GM12878 (cell line): ENCODE measurements at regions of chr10 and their contacts with region 1.

Region 1: DNA sequence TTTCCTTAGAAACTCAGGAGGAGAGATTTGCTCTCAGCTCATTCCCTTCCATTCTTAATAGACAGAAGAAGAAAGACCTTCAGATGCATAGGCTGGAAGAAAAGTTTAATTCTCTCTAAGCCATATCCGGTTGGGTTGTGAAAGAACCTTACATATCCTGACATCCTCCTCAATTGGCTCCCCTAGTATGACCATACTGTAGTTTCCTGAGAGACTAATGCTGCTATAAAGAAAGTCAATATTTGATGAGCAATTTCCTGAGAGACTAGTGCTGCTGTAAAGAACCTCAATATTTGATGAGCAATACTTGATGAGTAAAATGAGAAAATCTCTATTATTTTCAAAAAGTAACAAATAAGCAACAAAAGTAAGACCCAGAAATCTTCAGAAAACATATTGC is 888.5 kb upstream of the SORCS1 start:
- DNase-seq: no peak
- ATAC-seq: peak; percentile 37
- H3K4me3 ChIP-seq: no peak overlapping the region
- H3K27ac ChIP-seq: no peak overlapping the region
- H3K4me1 ChIP-seq: no peaks in the 10 kb centered on the region
- H3K27me3 ChIP-seq: no peaks in the 10 kb centered on the region
- CTCF ChIP-seq: no peak
- EP300 ChIP-seq: no peak
- POLR2A ChIP-seq: no peak
- RAD21 ChIP-seq: no peak

Region 2: GRCh38 chr10:107914450-107915214 is 138.3 kb before region 1 on chr10:
- CTCF ChIA-PET with region 1: no interaction called
- POLR2A ChIA-PET with region 1: no interaction called
- RAD21 ChIA-PET with region 1: interaction called, 8 read pairs
- SMC1A ChIA-PET with region 1: interaction called, 15 read pairs
- in situ Hi-C with region 1: no loop called
- intact Hi-C with region 1: no loop called
- DNase-seq: no peak
- ATAC-seq: peak; percentile 73
- H3K4me3 ChIP-seq: no peak overlapping the region
- H3K27ac ChIP-seq: no peak overlapping the region
- H3K4me1 ChIP-seq: no peaks in the 10 kb centered on the region
- H3K27me3 ChIP-seq: no peaks in the 10 kb centered on the region
- CTCF ChIP-seq: no peak; a peak in 1 of 6 replicates
- EP300 ChIP-seq: no peak
- POLR2A ChIP-seq: no peak
- RAD21 ChIP-seq: no peak

Region 3: DNA sequence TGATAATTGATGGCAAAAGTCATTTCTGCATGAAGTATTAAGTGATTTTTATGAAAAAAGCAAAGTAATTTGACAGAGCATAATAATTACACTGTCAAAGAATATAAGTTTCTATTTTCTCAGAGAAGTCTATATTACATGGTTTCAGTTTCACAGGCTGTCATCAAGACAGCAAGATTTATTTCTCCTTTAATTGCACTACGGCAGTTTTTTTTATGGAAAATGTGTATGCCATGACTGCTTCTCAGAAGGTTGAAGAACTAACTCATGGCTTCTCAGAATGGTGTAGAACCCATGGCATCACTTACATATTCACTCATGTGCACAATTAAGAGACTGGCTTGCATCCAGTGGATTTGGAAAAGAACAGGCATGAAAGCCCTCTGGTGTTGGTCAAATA is 18.2 kb before region 1 on chr10:
- CTCF ChIA-PET with region 1: interaction called, 6 read pairs
- POLR2A ChIA-PET with region 1: interaction called, 9 read pairs
- RAD21 ChIA-PET with region 1: interaction called, 7 read pairs
- SMC1A ChIA-PET with region 1: interaction called, 43 read pairs
- in situ Hi-C with region 1: no loop called
- intact Hi-C with region 1: no loop called
- DNase-seq: no peak
- ATAC-seq: peak; percentile 63
- H3K4me3 ChIP-seq: no peak overlapping the region
- H3K27ac ChIP-seq: no peak overlapping the region
- H3K4me1 ChIP-seq: no peaks in the 10 kb centered on the region
- H3K27me3 ChIP-seq: no peaks in the 10 kb centered on the region
- CTCF ChIP-seq: no peak
- EP300 ChIP-seq: no peak
- POLR2A ChIP-seq: no peak
- RAD21 ChIP-seq: no peak

Region 4: GRCh38 chr10:108039821-108040584 is 13.0 kb before region 1 on chr10:
- CTCF ChIA-PET with region 1: interaction called, 5 read pairs
- POLR2A ChIA-PET with region 1: interaction called, 7 read pairs
- RAD21 ChIA-PET with region 1: interaction called, 4 read pairs
- SMC1A ChIA-PET with region 1: interaction called, 43 read pairs
- in situ Hi-C with region 1: no loop called
- intact Hi-C with region 1: no loop called
- DNase-seq: no peak
- ATAC-seq: peak; percentile 39
- H3K4me3 ChIP-seq: no peak overlapping the region
- H3K27ac ChIP-seq: no peak overlapping the region
- H3K4me1 ChIP-seq: peaks cover 3% of the 10 kb centered on the region; the same call in 1 of the 2 replicates
- H3K27me3 ChIP-seq: no peaks in the 10 kb centered on the region
- CTCF ChIP-seq: no peak
- EP300 ChIP-seq: no peak
- POLR2A ChIP-seq: no peak
- RAD21 ChIP-seq: no peak

Region 5: GRCh38 chr10:108082596-108082995 is 29.6 kb after region 1 on chr10:
- CTCF ChIA-PET with region 1: interaction called, 3 read pairs
- POLR2A ChIA-PET with region 1: no interaction called
- RAD21 ChIA-PET with region 1: no interaction called
- SMC1A ChIA-PET with region 1: interaction called, 11 read pairs
- in situ Hi-C with region 1: no loop called
- intact Hi-C with region 1: no loop called
- DNase-seq: no peak
- ATAC-seq: peak; percentile 73
- H3K4me3 ChIP-seq: no peak overlapping the region
- H3K27ac ChIP-seq: no peak overlapping the region
- H3K4me1 ChIP-seq: no peaks in the 10 kb centered on the region
- H3K27me3 ChIP-seq: no peaks in the 10 kb centered on the region
- CTCF ChIP-seq: no peak
- EP300 ChIP-seq: no peak
- POLR2A ChIP-seq: no peak
- RAD21 ChIP-seq: no peak

Region 6: GRCh38 chr10:108323274-108323798 is 270.4 kb after region 1 on chr10:
- CTCF ChIA-PET with region 1: no interaction called
- POLR2A ChIA-PET with region 1: no interaction called
- RAD21 ChIA-PET with region 1: no interaction called
- SMC1A ChIA-PET with region 1: no interaction called
- in situ Hi-C with region 1: no loop called
- intact Hi-C with region 1: no loop called
- DNase-seq: no peak
- ATAC-seq: no peak
- H3K4me3 ChIP-seq: no peak overlapping the region
- H3K27ac ChIP-seq: no peak overlapping the region
- H3K4me1 ChIP-seq: no peaks in the 10 kb centered on the region
- H3K27me3 ChIP-seq: no peaks in the 10 kb centered on the region
- CTCF ChIP-seq: no peak
- EP300 ChIP-seq: no peak
- POLR2A ChIP-seq: no peak
- RAD21 ChIP-seq: no peak